ENCODE measurements at regions of chr3 and their contacts with region 1.

Region 1: DNA sequence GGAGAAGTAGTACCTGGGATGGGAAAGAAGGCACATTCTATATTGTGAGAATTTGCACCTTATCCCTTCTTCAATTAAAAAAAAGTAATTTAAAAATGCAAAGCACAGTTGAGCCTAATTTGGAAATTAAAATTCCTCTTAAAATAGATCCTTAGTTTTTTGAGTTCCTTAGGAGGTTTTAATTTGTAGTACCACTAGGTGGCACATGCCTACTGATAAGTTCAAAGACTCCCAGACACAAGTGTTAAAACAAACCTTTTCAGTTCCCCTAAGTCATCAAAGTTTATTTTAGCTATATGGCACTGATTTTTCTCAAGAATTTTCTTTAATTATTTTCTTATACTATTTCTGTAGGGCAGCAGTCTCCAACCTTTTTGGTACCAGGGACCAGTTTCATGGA is 127.6 kb upstream of the AZI2 start:
- DNase-seq: peak; percentile 54
- H3K4me3 ChIP-seq: no peak overlapping the region
- H3K27ac ChIP-seq: no peak overlapping the region
- H3K4me1 ChIP-seq: no peaks in the 10 kb centered on the region
- H3K27me3 ChIP-seq: no peaks in the 10 kb centered on the region
- CTCF ChIP-seq: peak; percentile 69

Region 2: DNA sequence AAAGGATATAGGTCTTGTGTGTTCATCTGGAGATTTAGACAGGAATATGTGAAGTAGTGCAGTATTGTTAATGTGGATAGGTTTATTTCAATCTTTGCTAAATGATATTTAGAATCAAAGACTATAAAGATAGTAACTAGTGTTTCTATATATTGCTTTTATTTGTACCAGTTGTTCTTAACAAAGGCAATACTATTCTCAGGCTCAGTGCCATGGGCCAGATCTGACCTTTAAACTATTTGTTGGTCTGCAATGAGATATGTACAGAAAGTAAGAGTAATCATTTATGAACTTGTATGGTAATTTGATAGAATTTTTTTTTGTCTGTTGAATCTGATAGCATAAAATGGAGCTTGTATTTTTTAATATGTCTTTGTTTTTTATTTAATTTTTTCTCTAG is 19.1 kb after region 1 on chr3:
- CTCF ChIA-PET with region 1: no interaction called
- POLR2A ChIA-PET with region 1: no interaction called
- intact Hi-C with region 1: no loop called
- DNase-seq: no peak
- H3K4me3 ChIP-seq: no peak overlapping the region
- H3K27ac ChIP-seq: no peak overlapping the region
- H3K4me1 ChIP-seq: no peaks in the 10 kb centered on the region
- H3K27me3 ChIP-seq: no peaks in the 10 kb centered on the region
- CTCF ChIP-seq: no peak

Region 3: DNA sequence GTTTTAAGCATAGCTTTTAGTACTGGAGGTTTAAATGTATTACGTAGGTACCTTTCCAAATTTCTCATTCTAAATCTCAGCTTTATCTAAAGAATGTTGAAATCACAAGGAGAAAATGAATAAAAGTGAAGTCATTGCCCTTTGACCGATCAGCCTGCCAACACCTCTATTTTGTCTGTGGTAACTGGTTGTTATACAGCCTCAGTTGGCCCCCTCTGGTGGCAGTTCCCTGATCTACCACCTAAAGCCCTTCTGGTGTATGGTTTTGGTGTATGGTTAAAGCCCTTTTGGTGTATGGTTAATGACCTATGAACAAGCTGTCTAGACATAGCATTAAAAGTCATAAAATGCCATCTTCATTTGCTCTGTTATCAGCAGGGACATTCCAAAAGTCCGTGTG is 250.6 kb after region 1 on chr3:
- CTCF ChIA-PET with region 1: no interaction called
- POLR2A ChIA-PET with region 1: no interaction called
- intact Hi-C with region 1: loop called (anchors 2 kb)
- DNase-seq: peak; percentile 58
- H3K4me3 ChIP-seq: no peak overlapping the region
- H3K27ac ChIP-seq: no peak overlapping the region
- H3K4me1 ChIP-seq: no peaks in the 10 kb centered on the region
- H3K27me3 ChIP-seq: no peaks in the 10 kb centered on the region
- CTCF ChIP-seq: peak; percentile 73